CD8-positive, alpha-beta T cell (primary cell): ENCODE measurements at regions of chr22 and their contacts with region 1.

Region 1: GRCh38 chr22:22787786-22788459 is 99.7 kb upstream of the IGLL5 start:
- DNase-seq: peak; percentile 35 to 86 (median 75)
- ATAC-seq: peak; percentile 80
- H3K4me3 ChIP-seq: no peak overlapping the region
- H3K4me3 Mint-ChIP-seq: no peak overlapping the region
- H3K27ac ChIP-seq: peak overlapping the region in 1 of 2 experiments; percentile 69
- H3K27ac Mint-ChIP-seq: peak overlapping the region; percentile 85
- H3K4me1 ChIP-seq: peaks cover 38% of the 10 kb centered on the region
- H3K4me1 Mint-ChIP-seq: peaks cover 54% of the 10 kb centered on the region
- H3K27me3 ChIP-seq: no peaks in the 10 kb centered on the region
- H3K27me3 Mint-ChIP-seq: no peaks in the 10 kb centered on the region
- CTCF ChIP-seq: peak; percentile 78

Region 2: GRCh38 chr22:22720201-22720723 is 67.7 kb before region 1 on chr22:
- CTCF ChIA-PET with region 1: interaction called, 10 read pairs
- POLR2A ChIA-PET with region 1: no interaction called
- intact Hi-C with region 1: no loop called
- DNase-seq: peak in 6 of 9 experiments; percentile 33 to 83 (median 64)
- ATAC-seq: peak; percentile 68
- H3K4me3 ChIP-seq: no peak overlapping the region
- H3K4me3 Mint-ChIP-seq: no peak overlapping the region
- H3K27ac ChIP-seq: peak overlapping the region in 1 of 2 experiments; percentile 74
- H3K27ac Mint-ChIP-seq: peak overlapping the region; percentile 81
- H3K4me1 ChIP-seq: peaks cover 25% of the 10 kb centered on the region
- H3K4me1 Mint-ChIP-seq: peaks cover 30% of the 10 kb centered on the region
- H3K27me3 ChIP-seq: no peaks in the 10 kb centered on the region
- H3K27me3 Mint-ChIP-seq: no peaks in the 10 kb centered on the region
- CTCF ChIP-seq: peak; percentile 47

Region 3: DNA sequence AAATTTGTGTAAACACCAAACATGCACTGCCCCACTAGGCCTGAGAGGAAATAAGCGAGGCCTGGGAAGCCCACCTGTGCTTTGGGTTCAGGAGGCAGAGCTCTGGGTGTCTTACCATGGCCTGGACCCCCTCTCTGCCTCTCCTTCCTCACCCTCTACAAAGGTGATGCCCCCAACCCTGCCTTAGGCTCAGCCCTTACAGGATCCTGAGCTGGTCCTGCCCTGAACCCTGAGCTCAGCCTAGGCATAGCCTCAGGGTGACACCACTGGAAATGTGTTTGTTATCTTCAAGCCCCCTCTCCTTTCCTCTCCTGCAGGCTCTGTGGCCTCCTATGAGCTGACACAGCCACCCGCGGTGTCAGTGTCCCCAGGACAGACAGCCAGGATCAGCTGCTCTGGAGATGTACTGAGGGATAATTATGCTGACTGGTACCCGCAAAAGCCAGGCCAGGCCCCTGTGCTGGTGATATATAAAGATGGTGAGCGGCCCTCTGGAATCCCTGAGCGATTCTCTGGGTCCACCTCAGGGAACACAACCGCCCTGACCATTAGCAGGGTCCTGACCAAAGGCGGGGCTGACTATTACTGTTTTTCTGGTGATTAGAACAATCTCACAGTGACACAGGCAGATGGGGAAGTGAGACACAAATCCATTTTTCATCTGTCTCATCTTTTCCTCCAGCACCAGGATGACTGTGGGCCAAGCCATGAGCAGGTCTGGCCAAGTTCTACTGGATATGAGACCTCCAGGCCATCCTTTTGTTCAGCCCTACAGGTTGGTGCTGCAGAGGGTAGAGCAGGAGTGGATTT is 25.8 kb before region 1 on chr22:
- CTCF ChIA-PET with region 1: interaction called, 153 read pairs
- POLR2A ChIA-PET with region 1: interaction called, 6 read pairs
- intact Hi-C with region 1: no loop called
- DNase-seq: no peak
- ATAC-seq: no peak
- H3K4me3 ChIP-seq: peak overlapping the region in 1 of 2 experiments; percentile 58
- H3K4me3 Mint-ChIP-seq: peak overlapping the region; percentile 68
- H3K27ac ChIP-seq: peak overlapping the region in 1 of 2 experiments; percentile 36
- H3K27ac Mint-ChIP-seq: peak overlapping the region; percentile 82
- H3K4me1 ChIP-seq: peaks cover 8% of the 10 kb centered on the region
- H3K4me1 Mint-ChIP-seq: peaks cover 55% of the 10 kb centered on the region
- H3K27me3 ChIP-seq: no peaks in the 10 kb centered on the region
- H3K27me3 Mint-ChIP-seq: no peaks in the 10 kb centered on the region
- CTCF ChIP-seq: no peak

Region 4: DNA sequence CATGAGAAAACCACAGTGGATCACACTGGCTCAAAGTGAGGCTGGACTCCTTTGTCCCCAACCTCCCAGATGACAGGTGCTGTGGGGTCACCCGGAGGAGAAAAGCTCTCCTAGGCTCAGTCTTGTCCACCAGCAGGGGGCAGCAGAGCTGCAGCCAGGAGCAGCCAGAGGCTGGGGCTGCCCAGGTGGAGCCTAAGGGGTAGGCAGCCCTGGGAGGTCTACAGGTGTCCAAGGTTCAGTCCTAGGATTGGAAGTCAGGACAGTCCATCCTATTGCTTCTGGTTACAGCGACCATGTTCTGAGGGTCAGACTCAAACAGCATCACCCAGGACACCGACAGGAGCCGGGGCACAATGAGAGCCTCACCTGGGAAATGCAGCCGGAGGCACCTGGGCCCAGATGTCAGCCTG is 22.1 kb after region 1 on chr22:
- CTCF ChIA-PET with region 1: interaction called, 78 read pairs
- POLR2A ChIA-PET with region 1: interaction called, 3 read pairs
- intact Hi-C with region 1: loop called in 1 of 2 experiments (anchors 2 kb)
- DNase-seq: peak; percentile 57 to 89 (median 70)
- ATAC-seq: peak; percentile 84
- H3K4me3 ChIP-seq: no peak overlapping the region
- H3K4me3 Mint-ChIP-seq: peak overlapping the region; percentile 37
- H3K27ac ChIP-seq: peak overlapping the region in 1 of 2 experiments; percentile 55
- H3K27ac Mint-ChIP-seq: peak overlapping the region; percentile 49
- H3K4me1 ChIP-seq: peaks cover 21% of the 10 kb centered on the region
- H3K4me1 Mint-ChIP-seq: peaks cover 53% of the 10 kb centered on the region
- H3K27me3 ChIP-seq: no peaks in the 10 kb centered on the region
- H3K27me3 Mint-ChIP-seq: no peaks in the 10 kb centered on the region
- CTCF ChIP-seq: peak; percentile 64

Region 5: DNA sequence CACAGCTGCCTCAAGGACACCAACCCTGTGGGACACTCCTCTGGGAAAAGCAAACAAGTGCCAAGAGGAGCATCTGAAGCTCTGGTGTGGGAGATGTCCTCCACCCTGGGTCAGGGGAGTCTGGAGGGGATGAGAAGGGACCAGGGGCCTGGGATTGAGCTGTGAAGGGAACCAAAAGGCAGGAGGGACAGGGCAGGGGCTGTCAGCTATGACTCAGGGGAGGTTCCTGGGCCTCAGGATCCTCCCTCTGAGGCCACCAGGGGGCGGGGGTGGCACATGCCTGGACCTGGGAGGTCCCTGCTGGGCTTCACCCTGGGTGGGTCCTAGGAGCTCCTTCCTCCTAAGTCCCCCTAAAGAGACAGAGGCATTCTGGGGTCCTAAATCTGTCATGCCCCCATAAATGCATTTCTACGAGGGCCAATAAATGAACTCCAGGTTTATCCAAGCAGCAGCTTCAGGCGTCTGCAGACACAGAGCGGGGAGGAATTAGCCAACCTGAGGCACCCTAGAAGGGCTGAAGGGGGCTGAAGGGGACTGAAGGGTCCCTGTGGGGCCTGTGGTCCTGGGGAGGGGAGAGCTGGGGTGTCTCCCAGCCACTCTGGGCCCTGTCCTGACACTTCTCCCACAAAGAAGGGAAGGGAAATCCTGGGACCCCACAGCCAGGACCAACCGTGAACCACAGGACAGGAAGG is 67.8 kb after region 1 on chr22:
- CTCF ChIA-PET with region 1: interaction called, 19 read pairs
- POLR2A ChIA-PET with region 1: no interaction called
- intact Hi-C with region 1: no loop called
- DNase-seq: peak in 8 of 9 experiments; percentile 19 to 69 (median 40)
- ATAC-seq: peak; percentile 49
- H3K4me3 ChIP-seq: no peak overlapping the region
- H3K4me3 Mint-ChIP-seq: no peak overlapping the region
- H3K27ac ChIP-seq: no peak overlapping the region
- H3K27ac Mint-ChIP-seq: no peak overlapping the region
- H3K4me1 ChIP-seq: no peaks in the 10 kb centered on the region
- H3K4me1 Mint-ChIP-seq: peaks cover 1% of the 10 kb centered on the region
- H3K27me3 ChIP-seq: no peaks in the 10 kb centered on the region
- H3K27me3 Mint-ChIP-seq: no peaks in the 10 kb centered on the region
- CTCF ChIP-seq: peak; percentile 35

Region 6: GRCh38 chr22:22877523-22878210 is 89.7 kb after region 1 on chr22:
- CTCF ChIA-PET with region 1: interaction called, 173 read pairs
- POLR2A ChIA-PET with region 1: interaction called, 3 read pairs
- intact Hi-C with region 1: loop called (anchors 1 to 5 kb)
- DNase-seq: peak; percentile 56 to 91 (median 81)
- ATAC-seq: peak; percentile 59
- H3K4me3 ChIP-seq: no peak overlapping the region
- H3K4me3 Mint-ChIP-seq: no peak overlapping the region
- H3K27ac ChIP-seq: no peak overlapping the region
- H3K27ac Mint-ChIP-seq: peak overlapping the region; percentile 41
- H3K4me1 ChIP-seq: no peaks in the 10 kb centered on the region
- H3K4me1 Mint-ChIP-seq: peaks cover 7% of the 10 kb centered on the region
- H3K27me3 ChIP-seq: no peaks in the 10 kb centered on the region
- H3K27me3 Mint-ChIP-seq: no peaks in the 10 kb centered on the region
- CTCF ChIP-seq: peak; percentile 78

Region 7: GRCh38 chr22:22983123-22983522 is 195.2 kb after region 1 on chr22:
- CTCF ChIA-PET with region 1: no interaction called
- POLR2A ChIA-PET with region 1: no interaction called
- intact Hi-C with region 1: no loop called
- DNase-seq: peak in 2 of 9 experiments; percentile 21 to 23
- ATAC-seq: no peak
- H3K4me3 ChIP-seq: no peak overlapping the region
- H3K4me3 Mint-ChIP-seq: no peak overlapping the region
- H3K27ac ChIP-seq: no peak overlapping the region
- H3K27ac Mint-ChIP-seq: no peak overlapping the region
- H3K4me1 ChIP-seq: peaks cover 9% of the 10 kb centered on the region
- H3K4me1 Mint-ChIP-seq: peaks cover 24% of the 10 kb centered on the region
- H3K27me3 ChIP-seq: no peaks in the 10 kb centered on the region
- H3K27me3 Mint-ChIP-seq: peaks cover 6% of the 10 kb centered on the region
- CTCF ChIP-seq: no peak

Region 8: GRCh38 chr22:23113067-23113846 is 325.3 kb after region 1 on chr22:
- CTCF ChIA-PET with region 1: no interaction called
- POLR2A ChIA-PET with region 1: no interaction called
- intact Hi-C with region 1: no loop called
- DNase-seq: no peak
- ATAC-seq: no peak
- H3K4me3 ChIP-seq: no peak overlapping the region
- H3K4me3 Mint-ChIP-seq: no peak overlapping the region
- H3K27ac ChIP-seq: no peak overlapping the region
- H3K27ac Mint-ChIP-seq: no peak overlapping the region
- H3K4me1 ChIP-seq: no peaks in the 10 kb centered on the region
- H3K4me1 Mint-ChIP-seq: no peaks in the 10 kb centered on the region
- H3K27me3 ChIP-seq: no peaks in the 10 kb centered on the region
- H3K27me3 Mint-ChIP-seq: no peaks in the 10 kb centered on the region
- CTCF ChIP-seq: no peak